ENCODE measurements at regions of chr14 and their contacts with region 1.

Region 1: DNA sequence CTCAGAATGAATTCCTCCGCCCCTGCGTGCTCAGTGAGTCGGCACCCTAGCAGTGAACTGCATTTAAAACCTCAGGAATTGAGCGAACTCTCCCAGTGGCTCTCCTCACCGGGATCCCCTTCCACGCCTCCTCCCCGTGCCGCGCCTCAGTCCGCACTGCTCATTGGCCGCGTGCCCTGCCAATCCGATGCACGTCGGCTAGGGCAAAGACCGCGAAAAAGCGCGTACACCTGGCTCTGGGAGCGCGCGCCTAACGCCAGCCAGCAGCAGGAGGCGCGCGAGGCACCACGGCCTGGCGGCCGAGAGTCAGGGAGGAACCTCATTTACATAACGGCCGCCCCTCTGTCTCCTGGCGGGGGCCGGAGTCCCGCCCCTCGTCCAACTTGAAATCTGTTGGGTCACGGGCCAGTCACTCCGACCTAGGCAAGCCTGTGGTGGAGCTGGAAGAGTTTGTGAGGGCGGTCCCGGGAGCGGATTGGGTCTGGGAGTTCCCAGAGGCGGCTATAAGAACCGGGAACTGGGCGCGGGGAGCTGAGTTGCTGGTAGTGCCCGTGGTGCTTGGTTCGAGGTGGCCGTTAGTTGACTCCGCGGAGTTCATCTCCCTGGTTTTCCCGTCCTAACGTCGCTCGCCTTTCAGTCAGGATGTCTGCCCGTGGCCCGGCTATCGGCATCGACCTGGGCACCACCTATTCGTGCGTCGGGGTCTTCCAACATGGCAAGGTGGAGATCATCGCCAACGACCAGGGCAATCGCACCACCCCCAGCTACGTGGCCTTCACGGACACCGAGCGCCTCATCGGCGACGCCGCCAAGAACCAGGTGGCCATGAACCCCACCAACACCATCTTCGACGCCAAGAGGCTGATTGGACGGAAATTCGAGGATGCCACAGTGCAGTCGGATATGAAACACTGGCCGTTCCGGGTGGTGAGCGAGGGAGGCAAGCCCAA is at the start of gene HSPA2:
- DNase-seq: peak; percentile 99
- ATAC-seq: peak; percentile 98
- total RNA-seq, gene HSPA2: 15.2 TPM

Region 2: GRCh38 chr14:64303471-64303917 is 237.0 kb before region 1 on chr14:
- intact Hi-C with region 1: no loop called
- DNase-seq: no peak
- ATAC-seq: no peak

Region 3: DNA sequence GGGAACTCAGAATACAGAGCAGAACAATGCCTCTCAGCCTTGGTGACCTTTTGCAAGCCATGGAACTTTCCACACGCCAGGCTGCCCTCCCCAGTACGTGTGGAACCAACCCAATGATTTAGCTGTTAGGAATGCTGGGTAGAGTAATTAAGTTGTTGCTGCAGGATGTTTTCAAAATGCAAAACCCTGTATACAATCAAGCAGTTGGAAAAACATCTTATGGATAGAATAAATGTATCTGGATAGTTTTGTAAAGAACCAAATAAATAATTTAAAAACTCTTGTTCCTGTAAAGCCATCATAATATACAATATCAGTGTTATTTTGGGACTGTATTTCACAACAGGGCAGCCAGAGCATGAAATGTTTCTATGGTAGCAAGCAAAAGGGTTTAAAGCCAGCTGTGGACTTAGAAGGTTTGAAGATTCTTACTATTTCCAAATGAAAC is 28.7 kb after region 1 on chr14:
- intact Hi-C with region 1: loop called (anchors 2 kb)
- DNase-seq: no peak
- ATAC-seq: peak; percentile 93

Region 4: GRCh38 chr14:64636208-64636979 is 95.9 kb after region 1 on chr14:
- intact Hi-C with region 1: loop called (anchors 1 kb)
- DNase-seq: peak; percentile 82
- ATAC-seq: peak; percentile 88